Activated naive CD4-positive, alpha-beta T cell treated with anti-CD3 and anti-CD28 coated beads for 36 hours (primary cell): ENCODE measurements at regions of chr1 and their contacts with region 1.

Region 1: DNA sequence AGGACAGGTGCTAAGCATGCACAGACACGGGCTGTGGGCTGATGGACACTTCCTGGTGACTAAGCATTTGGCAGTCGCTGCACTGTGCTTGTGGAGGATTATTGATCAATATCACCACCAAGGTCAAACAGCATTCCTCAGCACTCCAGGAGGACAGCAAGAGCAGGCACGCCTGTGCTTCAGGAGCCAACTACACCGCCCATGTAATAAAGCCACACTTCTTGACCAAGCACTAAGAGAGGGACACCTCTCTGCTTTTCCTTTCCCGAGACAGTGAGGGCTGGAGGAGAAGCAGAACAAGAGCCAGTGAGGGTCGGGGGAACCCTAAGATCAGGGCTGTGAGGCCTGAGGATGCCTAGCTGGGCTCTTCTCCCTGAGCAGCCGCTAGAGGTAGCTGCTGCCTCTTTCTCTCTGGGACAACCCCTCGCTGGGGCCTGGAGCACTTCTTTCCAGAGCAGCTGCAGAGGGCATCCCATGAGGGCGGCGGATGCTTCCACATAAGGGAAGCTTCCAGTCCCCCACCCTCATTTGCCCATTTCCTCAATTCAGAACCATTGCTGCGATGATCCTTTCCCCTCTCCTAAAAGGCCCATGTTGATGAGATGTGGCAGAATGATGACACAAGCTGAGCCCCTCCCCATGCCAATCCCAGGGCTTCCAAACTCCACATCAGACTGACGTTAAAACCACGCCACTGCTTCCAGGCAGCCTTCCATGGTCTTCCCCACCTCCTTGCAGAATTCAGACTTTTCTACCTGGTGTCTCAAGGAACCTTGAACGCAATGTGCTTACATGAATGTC is 19.1 kb downstream of the RAB7B start:
- DNase-seq: peak; percentile 63
- H3K4me3 Mint-ChIP-seq: no peak overlapping the region
- H3K27ac Mint-ChIP-seq: no peak overlapping the region
- H3K4me1 Mint-ChIP-seq: no peaks in the 10 kb centered on the region
- H3K27me3 Mint-ChIP-seq: no peaks in the 10 kb centered on the region

Region 2: GRCh38 chr1:205183676-205184335 is 800.3 kb before region 1 on chr1:
- CTCF ChIA-PET with region 1: no interaction called
- intact Hi-C with region 1: no loop called
- DNase-seq: no peak
- H3K4me3 Mint-ChIP-seq: no peak overlapping the region
- H3K27ac Mint-ChIP-seq: no peak overlapping the region
- H3K4me1 Mint-ChIP-seq: peaks cover 61% of the 10 kb centered on the region
- H3K27me3 Mint-ChIP-seq: no peaks in the 10 kb centered on the region

Region 3: DNA sequence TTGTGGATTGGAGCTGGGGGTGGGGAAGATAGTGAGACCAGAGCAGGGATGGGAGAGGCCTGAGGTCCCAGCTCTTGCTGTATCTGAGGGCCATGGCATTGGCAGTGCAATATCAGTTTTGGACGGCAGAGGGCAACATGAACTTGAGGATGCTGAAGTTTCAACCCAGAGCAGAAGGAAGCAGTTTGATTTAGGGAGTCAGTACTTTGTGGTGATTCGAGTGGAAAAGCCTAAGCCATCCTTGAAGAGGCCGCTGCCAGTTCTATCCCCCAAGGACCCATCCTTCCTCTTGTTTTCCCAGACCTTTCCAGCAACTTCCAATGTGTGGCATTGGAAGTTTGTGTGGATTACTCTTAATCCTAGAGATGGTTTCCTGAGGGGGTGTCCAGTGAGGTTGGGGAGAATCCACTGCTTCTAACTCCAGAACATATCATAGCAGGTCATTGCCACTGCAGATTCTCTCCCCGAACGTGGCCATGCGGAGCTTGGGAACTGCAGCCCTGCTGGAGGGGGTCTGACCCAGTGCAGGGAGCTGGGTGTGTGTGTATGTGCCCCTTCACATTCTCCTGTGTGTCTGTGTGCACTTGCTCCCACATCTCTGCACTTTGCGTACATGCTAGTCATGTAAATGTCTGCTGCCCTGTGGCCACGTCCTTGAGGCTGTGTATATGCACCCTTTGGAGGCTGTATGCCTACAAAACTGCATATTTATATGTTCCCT is 64.9 kb before region 1 on chr1:
- CTCF ChIA-PET with region 1: interaction called, 172 read pairs
- intact Hi-C with region 1: no loop called
- DNase-seq: peak; percentile 91
- H3K4me3 Mint-ChIP-seq: no peak overlapping the region
- H3K27ac Mint-ChIP-seq: no peak overlapping the region
- H3K4me1 Mint-ChIP-seq: no peaks in the 10 kb centered on the region
- H3K27me3 Mint-ChIP-seq: no peaks in the 10 kb centered on the region

Region 4: GRCh38 chr1:206030714-206031113 is 46.6 kb after region 1 on chr1:
- CTCF ChIA-PET with region 1: interaction called, 7 read pairs
- intact Hi-C with region 1: loop called (anchors 1 kb)
- DNase-seq: peak; percentile 86
- H3K4me3 Mint-ChIP-seq: no peak overlapping the region
- H3K27ac Mint-ChIP-seq: no peak overlapping the region
- H3K4me1 Mint-ChIP-seq: peaks cover 6% of the 10 kb centered on the region
- H3K27me3 Mint-ChIP-seq: peaks cover 18% of the 10 kb centered on the region

Region 5: DNA sequence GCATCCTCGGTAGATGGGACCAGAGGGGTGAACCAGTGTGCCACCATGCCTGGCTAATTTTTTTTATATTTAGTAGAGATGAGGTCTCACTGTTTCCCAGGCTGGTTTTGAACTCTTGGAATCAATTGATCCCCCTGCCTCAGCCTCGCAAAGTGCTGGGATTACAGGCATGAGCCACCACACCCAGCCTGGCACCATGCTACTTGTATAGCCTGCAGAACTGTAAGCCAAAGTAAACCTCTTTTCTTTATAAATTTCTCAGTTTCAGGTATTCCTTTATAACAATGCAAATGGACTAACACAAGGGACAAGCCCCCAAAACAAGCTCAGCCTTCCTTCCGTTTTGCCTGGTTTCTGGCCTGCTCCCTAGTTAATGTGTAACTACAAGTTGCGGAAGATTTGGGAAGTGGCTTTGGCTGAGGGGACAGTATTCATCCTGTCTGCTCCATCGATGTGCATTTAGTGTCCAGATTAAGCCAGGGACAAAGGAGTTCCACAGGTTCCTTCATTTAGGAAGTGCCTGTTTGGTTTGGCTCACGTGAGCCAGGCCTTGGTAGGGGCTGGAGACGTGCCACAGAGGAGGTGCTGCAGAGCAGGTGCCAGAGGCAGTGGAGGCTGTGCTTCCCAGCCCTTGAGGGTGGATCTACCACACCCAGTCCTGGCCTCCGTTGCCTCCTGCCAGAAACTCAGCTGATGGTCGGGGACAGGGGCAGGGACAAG is 128.6 kb after region 1 on chr1:
- CTCF ChIA-PET with region 1: interaction called, 18 read pairs
- intact Hi-C with region 1: no loop called
- DNase-seq: no peak
- H3K4me3 Mint-ChIP-seq: no peak overlapping the region
- H3K27ac Mint-ChIP-seq: no peak overlapping the region
- H3K4me1 Mint-ChIP-seq: peaks cover 9% of the 10 kb centered on the region
- H3K27me3 Mint-ChIP-seq: peaks cover 18% of the 10 kb centered on the region